PC-9 (cell line): ENCODE measurements at regions of chr2 and their contacts with region 1.

Region 1: DNA sequence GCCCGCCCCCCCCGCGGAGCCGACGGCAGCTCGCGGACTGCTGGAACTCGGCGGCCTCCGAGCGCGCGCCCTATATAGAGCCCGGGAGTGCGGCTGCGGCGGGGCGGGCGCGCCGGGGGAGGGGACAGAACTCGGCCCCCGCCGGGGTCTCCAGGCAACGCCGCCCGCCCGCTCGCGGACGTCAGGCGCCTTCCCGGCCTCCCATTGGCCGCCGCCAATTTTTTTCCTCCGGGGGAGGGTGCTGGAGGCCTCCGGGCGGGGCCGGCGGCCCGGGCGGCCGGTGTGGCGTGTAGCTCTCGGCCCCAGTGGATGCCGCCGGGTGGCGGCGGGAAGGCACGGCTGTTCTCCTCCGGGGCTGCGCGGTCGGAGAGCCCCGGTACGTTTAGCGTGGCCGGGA is at the start of gene ZFP36L2:
- DNase-seq: peak; percentile 88 to 99
- H3K4me3 ChIP-seq: peak within 1 kb of the TSS; percentile 72
- H3K27ac ChIP-seq: peak within 1 kb of the TSS; percentile 92
- H3K4me1 ChIP-seq: peaks cover 34% of the 10 kb centered on the region
- H3K27me3 ChIP-seq: no peaks in the 10 kb centered on the region
- CTCF ChIP-seq: no peak
- total RNA-seq, gene ZFP36L2: 31.3 and 34.3 TPM in 2 replicates

Region 2: GRCh38 chr2:42944779-42945415 is 281.7 kb before region 1 on chr2:
- CTCF ChIA-PET with region 1: interaction called, 9 read pairs
- POLR2A ChIA-PET with region 1: no interaction called
- intact Hi-C with region 1: loop called (anchors 1 kb)
- DNase-seq: no peak
- H3K4me3 ChIP-seq: no peak overlapping the region
- H3K27ac ChIP-seq: no peak overlapping the region
- H3K4me1 ChIP-seq: peaks cover 3% of the 10 kb centered on the region; the same call in 1 of the 2 replicates
- H3K27me3 ChIP-seq: no peaks in the 10 kb centered on the region
- CTCF ChIP-seq: no peak

Region 3: GRCh38 chr2:42957109-42957860 is 269.3 kb before region 1 on chr2:
- CTCF ChIA-PET with region 1: no interaction called
- POLR2A ChIA-PET with region 1: no interaction called
- intact Hi-C with region 1: no loop called
- DNase-seq: peak in 1 of 2 experiments; percentile 96
- H3K4me3 ChIP-seq: no peak overlapping the region
- H3K27ac ChIP-seq: peak overlapping the region; percentile 69
- H3K4me1 ChIP-seq: peaks cover 63% of the 10 kb centered on the region
- H3K27me3 ChIP-seq: no peaks in the 10 kb centered on the region
- CTCF ChIP-seq: no peak

Region 4: DNA sequence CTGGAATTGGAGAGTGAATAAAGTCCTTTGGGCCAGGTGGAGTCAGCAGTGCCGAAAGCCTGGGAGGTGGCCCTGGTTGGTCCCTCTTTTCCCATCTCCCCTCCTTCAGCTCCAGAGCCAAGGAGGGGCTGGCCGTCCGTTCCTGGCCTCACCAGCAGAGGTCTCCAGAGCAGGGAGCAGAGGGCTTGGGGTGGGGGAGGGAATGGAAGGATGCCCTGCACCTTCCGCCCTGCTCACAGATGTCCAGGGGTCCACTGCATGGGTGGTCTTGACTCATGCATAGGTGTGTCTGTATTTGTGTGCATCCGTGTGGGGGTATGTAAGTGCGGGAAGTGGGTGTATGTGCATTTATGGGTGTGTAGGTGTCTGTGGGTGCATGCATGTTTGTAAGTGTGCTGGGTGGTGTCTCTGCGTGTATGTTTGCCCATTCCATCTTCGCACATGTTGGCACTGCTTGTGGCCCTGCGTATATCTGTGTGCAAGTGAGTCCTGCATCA is 202.0 kb before region 1 on chr2:
- CTCF ChIA-PET with region 1: interaction called, 4 read pairs
- POLR2A ChIA-PET with region 1: interaction called, 4 read pairs
- intact Hi-C with region 1: loop called (anchors 1 kb)
- DNase-seq: peak in 1 of 2 experiments; percentile 67
- H3K4me3 ChIP-seq: no peak overlapping the region
- H3K27ac ChIP-seq: no peak overlapping the region
- H3K4me1 ChIP-seq: peaks cover 19% of the 10 kb centered on the region; the same call in 1 of the 2 replicates
- H3K27me3 ChIP-seq: no peaks in the 10 kb centered on the region
- CTCF ChIP-seq: peak; percentile 90

Region 5: DNA sequence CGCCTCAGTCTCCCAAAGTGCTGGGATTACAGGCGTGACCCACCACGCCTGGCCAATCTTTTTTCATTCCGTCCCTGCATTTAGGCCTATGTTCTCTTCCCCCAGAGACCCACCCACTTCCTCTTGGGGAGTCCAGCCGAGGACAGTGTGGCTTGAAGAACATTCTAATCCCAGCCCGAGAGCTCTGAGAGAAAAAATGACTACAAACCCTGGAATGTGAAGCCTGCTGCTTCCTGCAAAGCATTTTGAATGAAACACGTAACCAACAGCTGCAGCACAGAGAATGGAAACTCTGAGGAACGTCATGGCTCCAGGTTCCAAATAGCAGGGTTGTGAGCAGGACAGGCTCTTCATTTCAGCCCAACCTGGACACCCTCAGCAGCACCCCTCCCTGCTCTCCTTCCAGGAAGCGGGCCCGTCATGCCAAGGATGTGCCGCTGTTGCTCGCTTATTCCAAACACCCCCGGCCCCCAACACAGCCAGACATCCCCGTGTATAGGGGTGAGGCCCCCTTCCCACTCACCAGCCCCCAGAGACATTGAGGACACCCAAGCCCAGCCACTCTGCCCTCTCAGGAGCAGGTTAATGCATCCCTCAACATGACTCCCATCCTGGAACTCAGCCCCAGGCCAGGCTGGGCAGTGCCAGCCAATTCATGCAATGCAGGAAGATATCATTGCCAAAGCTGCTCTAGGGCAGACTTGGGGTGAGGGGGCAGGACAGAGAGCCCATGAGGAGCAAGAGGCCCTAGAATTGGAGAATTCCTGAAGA is 139.9 kb before region 1 on chr2:
- CTCF ChIA-PET with region 1: no interaction called
- POLR2A ChIA-PET with region 1: no interaction called
- intact Hi-C with region 1: loop called (anchors 2 kb)
- DNase-seq: peak; percentile 88 to 100
- H3K4me3 ChIP-seq: no peak overlapping the region
- H3K27ac ChIP-seq: peak overlapping the region; percentile 85
- H3K4me1 ChIP-seq: peaks cover 68% of the 10 kb centered on the region
- H3K27me3 ChIP-seq: no peaks in the 10 kb centered on the region
- CTCF ChIP-seq: no peak

Region 6: GRCh38 chr2:43105586-43106558 is 120.7 kb before region 1 on chr2:
- CTCF ChIA-PET with region 1: no interaction called
- POLR2A ChIA-PET with region 1: no interaction called
- intact Hi-C with region 1: no loop called
- DNase-seq: no peak
- H3K4me3 ChIP-seq: no peak overlapping the region
- H3K27ac ChIP-seq: no peak overlapping the region
- H3K4me1 ChIP-seq: peaks cover 20% of the 10 kb centered on the region
- H3K27me3 ChIP-seq: no peaks in the 10 kb centered on the region
- CTCF ChIP-seq: peak; percentile 49

Region 7: DNA sequence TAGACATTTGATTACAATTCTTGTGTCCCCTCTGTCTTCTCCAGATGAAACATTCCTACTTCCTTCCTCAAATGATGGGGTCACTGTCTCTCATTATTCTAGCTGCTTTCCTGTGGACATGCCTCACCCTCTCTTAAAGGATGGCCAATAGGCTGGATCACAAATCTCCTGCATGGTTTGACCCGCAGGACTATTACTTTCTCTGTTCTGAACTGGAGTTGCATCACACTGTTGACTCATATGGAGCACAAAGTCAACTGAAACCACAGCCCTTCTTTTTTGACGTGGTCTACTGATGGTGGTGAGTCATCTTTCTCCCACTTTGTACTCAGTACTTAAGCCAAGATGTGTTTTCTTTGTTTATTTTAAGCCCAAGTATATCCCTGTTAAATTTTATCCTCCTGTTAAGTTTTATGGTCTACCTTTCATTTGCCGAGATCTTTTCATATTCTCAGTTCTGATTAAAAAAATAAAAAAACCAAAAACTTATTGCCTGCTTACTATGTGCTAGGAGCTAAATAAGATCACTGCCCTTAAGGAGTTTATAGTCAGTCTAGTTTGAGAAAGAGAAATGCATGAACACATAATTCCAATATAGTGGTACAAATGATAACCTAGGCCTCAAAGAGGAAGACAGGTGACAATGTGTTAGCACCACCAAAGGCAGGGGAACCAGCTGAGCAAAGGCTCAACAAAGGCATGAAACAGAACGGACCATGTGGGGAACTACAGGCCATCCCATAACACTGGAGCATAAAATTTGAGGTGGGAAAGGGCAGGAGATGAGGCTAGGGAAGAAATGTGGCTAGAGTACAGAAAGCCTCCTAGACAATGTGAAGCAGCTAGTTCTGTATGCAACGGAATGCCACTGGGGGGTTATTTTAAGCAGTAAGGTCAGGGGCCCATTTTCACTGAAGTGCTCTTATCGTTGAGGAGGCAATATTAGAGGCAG is 67.5 kb after region 1 on chr2:
- CTCF ChIA-PET with region 1: no interaction called
- POLR2A ChIA-PET with region 1: no interaction called
- intact Hi-C with region 1: no loop called
- DNase-seq: peak; percentile 54 to 96
- H3K4me3 ChIP-seq: no peak overlapping the region
- H3K27ac ChIP-seq: peak overlapping the region; percentile 87
- H3K4me1 ChIP-seq: peaks cover 25% of the 10 kb centered on the region
- H3K27me3 ChIP-seq: no peaks in the 10 kb centered on the region
- CTCF ChIP-seq: no peak

Region 8: DNA sequence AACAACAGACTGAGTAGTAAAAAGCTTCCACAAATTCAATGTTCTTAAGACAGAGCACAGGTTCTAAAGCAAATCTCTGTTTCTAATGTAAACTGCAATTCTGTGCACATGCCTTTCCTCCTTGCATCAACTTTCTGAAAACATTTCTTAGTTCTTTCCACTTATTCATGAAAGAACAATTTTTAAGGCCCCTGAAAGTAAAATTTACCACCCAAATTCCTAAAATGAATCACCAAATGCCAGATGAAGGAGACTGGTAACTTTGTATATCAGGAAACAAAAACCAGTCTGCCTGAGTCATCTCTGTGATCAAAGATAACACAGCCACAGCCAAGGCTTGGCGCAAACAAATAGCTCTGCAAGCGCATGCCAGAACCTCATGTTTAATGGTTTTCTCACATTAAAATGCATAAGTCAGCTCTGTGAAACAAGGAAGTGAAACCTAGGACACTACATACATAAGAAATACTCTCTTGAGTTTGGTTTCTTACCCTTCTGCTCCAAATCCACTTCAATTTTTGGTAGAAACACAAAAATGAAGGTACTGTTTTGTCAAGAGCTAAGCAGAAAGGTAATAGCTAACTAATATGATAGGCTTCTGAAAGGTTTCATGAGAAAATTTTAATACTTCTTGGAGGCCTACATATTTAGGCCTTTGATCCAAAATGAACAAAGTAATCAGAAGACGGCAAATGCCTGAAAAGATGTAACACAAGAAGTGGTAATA is 199.9 kb after region 1 on chr2:
- CTCF ChIA-PET with region 1: interaction called, 6 read pairs
- POLR2A ChIA-PET with region 1: interaction called, 6 read pairs
- intact Hi-C with region 1: loop called (anchors 1 kb)
- DNase-seq: peak; percentile 83 to 100
- H3K4me3 ChIP-seq: peak overlapping the region; percentile 0; the same call in 1 of the 2 replicates
- H3K27ac ChIP-seq: peak overlapping the region; percentile 100
- H3K4me1 ChIP-seq: peaks cover 78% of the 10 kb centered on the region
- H3K27me3 ChIP-seq: no peaks in the 10 kb centered on the region
- CTCF ChIP-seq: no peak

Region 9: GRCh38 chr2:43542285-43542937 is 315.9 kb after region 1 on chr2:
- CTCF ChIA-PET with region 1: interaction called, 5 read pairs
- POLR2A ChIA-PET with region 1: no interaction called
- intact Hi-C with region 1: loop called (anchors 2 kb)
- DNase-seq: peak in 1 of 2 experiments; percentile 56
- H3K4me3 ChIP-seq: no peak overlapping the region
- H3K27ac ChIP-seq: no peak overlapping the region
- H3K4me1 ChIP-seq: no peaks in the 10 kb centered on the region
- H3K27me3 ChIP-seq: no peaks in the 10 kb centered on the region
- CTCF ChIP-seq: peak; percentile 91